ENCODE measurements at regions of chr16 and their contacts with region 1.

Region 1: DNA sequence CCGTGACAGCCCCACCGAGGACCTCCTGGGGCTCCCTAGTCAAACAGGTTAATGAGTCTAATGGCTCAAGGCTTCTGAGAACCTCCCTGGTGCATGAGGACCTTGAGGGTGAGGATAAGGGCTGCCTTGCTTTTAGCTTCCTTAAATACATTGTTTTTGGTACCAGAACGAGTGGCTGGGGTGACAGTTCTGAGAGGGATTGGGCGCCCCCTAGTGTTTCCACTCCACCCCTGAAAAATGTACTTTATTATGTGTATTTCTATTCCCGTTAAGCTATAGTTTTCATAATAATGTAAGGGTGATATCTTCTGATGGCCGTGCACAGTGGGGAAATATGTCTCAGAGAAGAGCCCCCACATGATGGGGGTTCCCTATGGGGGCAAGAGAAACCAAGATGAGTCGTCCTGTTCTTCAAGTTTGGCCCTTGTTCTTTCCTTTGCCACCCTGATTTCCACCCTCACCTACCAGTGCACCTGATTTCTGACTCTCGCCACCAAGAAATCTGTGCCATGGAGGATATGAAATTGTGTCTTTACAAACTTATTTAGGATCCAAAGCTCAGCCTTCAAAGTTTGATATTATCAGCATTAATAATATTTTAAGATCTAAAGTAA is 14.5 kb upstream of the VWA3A start:
- DNase-seq: peak; percentile 64
- H3K27ac ChIP-seq: no peak overlapping the region
- CTCF ChIP-seq: peak; percentile 86

Region 2: GRCh38 chr16:21982108-21982507 is 95.7 kb before region 1 on chr16:
- CTCF ChIA-PET with region 1: interaction called, 21 read pairs
- POLR2A ChIA-PET with region 1: no interaction called
- DNase-seq: no peak
- H3K27ac ChIP-seq: no peak overlapping the region
- CTCF ChIP-seq: no peak

Region 3: DNA sequence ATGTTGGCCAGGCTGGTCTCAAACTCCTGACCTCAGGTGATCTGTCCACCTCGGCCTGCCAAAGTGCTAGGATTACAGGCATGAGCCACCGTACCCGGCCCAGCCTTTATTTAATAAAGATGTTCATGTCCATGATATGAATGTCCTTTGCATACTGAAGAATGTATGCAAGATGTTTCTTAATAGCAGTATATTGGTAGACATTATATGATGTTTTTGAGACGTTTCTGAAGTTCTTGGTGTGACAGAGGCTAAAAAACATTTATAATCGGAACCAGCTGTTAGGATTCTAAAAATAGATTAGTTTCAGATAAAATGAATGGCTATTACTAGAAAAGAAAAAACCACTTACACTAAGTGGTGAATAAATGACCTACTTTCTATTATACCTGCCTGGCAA is 88.7 kb before region 1 on chr16:
- CTCF ChIA-PET with region 1: interaction called, 20 read pairs
- POLR2A ChIA-PET with region 1: no interaction called
- DNase-seq: no peak
- H3K27ac ChIP-seq: no peak overlapping the region
- CTCF ChIP-seq: no peak

Region 4: DNA sequence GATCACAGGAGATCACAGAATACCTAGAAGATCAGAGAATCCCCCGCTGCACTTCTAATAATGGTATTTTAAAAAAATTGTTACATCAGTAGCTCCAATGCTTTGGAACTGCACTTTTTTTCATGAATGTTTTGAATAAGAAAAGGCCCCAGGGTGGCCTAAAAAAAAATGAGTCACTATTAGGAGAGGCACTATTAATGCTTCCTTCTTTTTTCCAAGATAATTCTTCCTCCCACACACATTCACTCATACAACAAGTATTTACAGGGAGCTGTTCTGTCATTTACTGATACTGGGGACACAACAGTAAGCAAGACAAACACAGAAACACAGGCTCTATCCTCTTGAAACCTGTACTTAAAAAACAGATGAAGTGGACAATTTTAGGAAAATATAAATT is 76.2 kb before region 1 on chr16:
- CTCF ChIA-PET with region 1: interaction called, 47 read pairs
- POLR2A ChIA-PET with region 1: no interaction called
- DNase-seq: peak; percentile 78
- H3K27ac ChIP-seq: no peak overlapping the region
- CTCF ChIP-seq: no peak

Region 5: DNA sequence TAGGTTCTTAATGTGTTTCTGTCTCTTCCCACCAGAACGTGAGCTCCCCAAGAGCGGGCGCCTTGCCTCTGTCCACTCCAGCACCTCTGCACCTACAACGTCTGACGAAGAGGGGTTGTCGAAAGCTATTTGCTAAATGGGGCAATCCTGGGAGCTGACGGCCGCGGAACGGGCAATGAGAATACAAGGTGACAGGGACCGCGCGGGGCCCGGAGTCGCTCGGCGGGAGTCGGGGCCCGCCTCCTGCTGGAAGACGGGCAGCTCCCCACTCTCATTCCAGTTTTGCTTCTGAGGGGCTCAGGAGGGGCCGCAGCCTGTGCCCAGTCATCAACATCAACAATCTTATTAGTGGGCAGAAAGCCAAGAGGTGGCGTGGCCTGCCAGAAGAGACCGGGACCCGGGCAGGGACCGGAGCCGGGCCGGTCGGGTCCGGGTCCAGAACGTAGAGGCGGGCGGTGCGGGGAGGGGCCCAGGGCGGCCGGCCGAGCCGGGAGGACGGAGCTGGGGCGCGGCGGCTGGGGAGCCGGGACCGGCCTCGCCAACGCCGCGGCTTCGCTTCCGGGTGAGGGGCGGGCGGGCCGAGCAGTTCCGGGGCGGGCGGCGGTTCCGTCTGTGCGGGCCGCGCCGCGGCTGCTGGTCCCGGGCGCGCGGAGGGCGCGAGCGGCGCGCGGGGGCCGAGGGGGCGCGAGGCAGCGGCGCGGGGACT is 70.1 kb before region 1 on chr16 and contains the start of gene MOSMO:
- CTCF ChIA-PET with region 1: interaction called, 47 read pairs
- POLR2A ChIA-PET with region 1: no interaction called
- DNase-seq: peak; percentile 73
- H3K27ac ChIP-seq: peak within 1 kb of the TSS; percentile 78
- CTCF ChIP-seq: no peak

Region 6: DNA sequence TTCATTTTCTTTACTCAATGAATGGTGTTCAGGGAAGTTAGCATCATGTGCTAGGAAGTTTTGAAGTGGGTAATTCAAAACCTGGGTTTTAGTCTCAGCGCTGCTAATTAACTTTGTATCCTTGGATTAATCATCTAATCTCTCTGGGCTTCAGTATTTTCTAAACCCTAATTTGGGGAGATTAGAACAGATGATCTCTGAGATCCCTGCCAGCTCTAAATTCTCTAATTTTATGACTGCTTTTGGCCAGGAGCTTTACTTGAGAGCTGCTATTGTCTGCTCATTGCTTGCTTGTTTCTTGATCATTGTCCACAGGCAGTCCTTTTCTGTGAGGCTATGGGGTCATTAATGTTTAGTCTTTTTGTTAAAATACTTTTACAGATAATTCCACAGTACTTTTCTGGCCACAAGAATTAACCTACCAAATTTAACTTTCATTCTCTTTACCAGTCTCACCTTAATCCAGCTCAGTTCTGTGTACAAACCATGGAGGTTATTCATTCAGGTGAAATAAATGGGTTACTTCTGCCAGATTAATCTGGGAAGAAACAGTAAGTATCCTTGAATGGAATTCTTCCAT is 13.8 kb before region 1 on chr16:
- CTCF ChIA-PET with region 1: interaction called, 19 read pairs
- POLR2A ChIA-PET with region 1: no interaction called
- DNase-seq: no peak
- H3K27ac ChIP-seq: no peak overlapping the region
- CTCF ChIP-seq: no peak

Region 7: GRCh38 chr16:22098405-22099255 is 20.8 kb after region 1 on chr16:
- CTCF ChIA-PET with region 1: interaction called, 16 read pairs
- POLR2A ChIA-PET with region 1: no interaction called
- DNase-seq: peak; percentile 75
- H3K27ac ChIP-seq: no peak overlapping the region
- CTCF ChIP-seq: peak; percentile 74

Measured in RWPE1 (cell line).